Left colon (tissue), 2 donors: ENCODE measurements at regions of chr12 and their contacts with region 1.

Region 1: GRCh38 chr12:106675651-106676435 is 93.0 kb downstream of the RFX4 start:
- DNase-seq: no peak
- ATAC-seq: no peak

Region 2: GRCh38 chr12:106814714-106815113 is 138.9 kb after region 1 on chr12:
- intact Hi-C with region 1: no loop called
- DNase-seq: no peak
- ATAC-seq: no peak

Region 3: DNA sequence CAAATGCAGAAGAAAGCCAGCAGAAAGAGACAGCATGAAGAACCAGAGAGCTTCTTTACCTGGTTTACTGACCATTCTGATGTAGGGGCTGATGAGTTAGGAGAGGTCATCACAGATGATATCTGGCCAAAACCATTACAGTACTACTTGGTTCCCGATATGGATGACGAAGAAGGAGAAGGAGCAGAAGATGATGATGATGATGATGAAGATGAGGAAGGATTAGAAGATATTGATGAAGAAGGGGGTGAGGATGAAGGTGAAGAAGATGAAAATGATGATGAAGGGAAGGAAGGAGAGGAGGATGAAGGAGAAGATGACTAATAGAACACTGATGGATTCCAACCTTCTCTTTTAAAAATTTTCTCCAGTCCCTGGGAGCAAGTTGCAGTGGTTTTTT is 595.7 kb after region 1 on chr12:
- intact Hi-C with region 1: loop called in 1 of 2 experiments (anchors 5 kb)
- DNase-seq: no peak
- ATAC-seq: no peak